ENCODE measurements at regions of chr5 and their contacts with region 1.

Region 1: GRCh38 chr5:40223884-40224402 is 455.8 kb upstream of the PTGER4 start:
- DNase-seq: peak; percentile 43
- H3K4me3 Mint-ChIP-seq: peak overlapping the region; percentile 54
- H3K27ac Mint-ChIP-seq: peak overlapping the region; percentile 94
- H3K4me1 Mint-ChIP-seq: peaks cover 51% of the 10 kb centered on the region
- H3K27me3 Mint-ChIP-seq: no peaks in the 10 kb centered on the region

Region 2: GRCh38 chr5:40240111-40240510 is 16.2 kb after region 1 on chr5:
- intact Hi-C with region 1: loop called (anchors 1 kb)
- DNase-seq: no peak
- H3K4me3 Mint-ChIP-seq: no peak overlapping the region
- H3K27ac Mint-ChIP-seq: no peak overlapping the region
- H3K4me1 Mint-ChIP-seq: peaks cover 20% of the 10 kb centered on the region
- H3K27me3 Mint-ChIP-seq: no peaks in the 10 kb centered on the region

Region 3: DNA sequence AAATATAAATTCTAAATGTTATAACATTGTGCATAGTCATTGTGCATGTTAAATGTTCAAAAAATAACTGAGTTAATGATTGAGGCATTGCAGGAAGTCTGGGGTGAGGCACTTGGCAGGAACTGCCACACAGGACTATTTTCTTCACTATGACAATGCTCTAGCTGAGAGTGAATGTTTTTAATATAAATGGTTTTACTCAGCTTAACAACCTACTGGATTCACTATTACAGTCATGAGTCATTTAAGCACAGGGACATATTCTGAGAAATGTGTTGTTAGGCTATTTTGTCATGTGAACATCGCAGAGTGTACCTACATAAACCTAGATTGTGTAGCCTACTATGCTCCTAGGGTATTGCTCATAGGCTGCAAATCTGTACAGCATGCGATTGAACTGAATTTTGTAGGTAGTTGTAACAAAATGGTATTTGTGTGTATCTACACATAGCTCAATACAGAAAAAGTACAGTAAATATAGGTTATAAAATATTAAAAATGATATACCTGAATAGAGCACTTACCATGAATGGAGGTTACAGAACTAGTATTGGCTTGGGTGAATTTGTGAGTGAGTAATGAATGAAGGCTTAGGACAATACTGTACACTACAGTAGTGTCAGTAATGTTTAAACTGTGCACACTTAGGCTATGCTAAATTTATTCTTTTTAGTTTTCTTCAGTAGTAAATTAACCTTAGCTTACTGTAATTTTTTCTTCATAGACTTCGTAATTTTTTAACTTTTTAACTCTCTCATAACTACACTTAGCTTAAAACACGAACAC is 109.7 kb after region 1 on chr5:
- intact Hi-C with region 1: loop called (anchors 1 kb)
- DNase-seq: no peak
- H3K4me3 Mint-ChIP-seq: no peak overlapping the region
- H3K27ac Mint-ChIP-seq: peak overlapping the region; percentile 43
- H3K4me1 Mint-ChIP-seq: peaks cover 43% of the 10 kb centered on the region
- H3K27me3 Mint-ChIP-seq: no peaks in the 10 kb centered on the region

Region 4: DNA sequence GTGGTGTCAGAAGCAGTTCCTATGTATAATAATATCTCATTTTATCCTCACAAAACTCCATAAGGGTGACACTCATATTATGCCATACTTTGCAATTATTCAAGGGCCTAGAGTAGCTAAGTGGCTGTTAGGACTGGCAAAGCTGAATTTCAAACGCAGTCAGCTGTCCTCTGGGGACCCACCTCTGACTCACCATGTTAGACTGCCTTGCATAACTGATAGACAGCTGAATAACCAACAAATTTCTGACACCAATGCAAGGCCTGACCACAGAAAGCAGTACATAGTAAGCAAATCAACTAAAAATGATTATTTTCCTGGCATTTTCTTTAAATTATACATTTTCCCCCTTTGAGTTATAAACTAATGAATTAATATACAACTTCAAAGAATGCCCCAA is 204.2 kb after region 1 on chr5:
- intact Hi-C with region 1: loop called (anchors 1 kb)
- DNase-seq: no peak
- H3K4me3 Mint-ChIP-seq: no peak overlapping the region
- H3K27ac Mint-ChIP-seq: peak overlapping the region; percentile 76
- H3K4me1 Mint-ChIP-seq: peaks cover 49% of the 10 kb centered on the region
- H3K27me3 Mint-ChIP-seq: no peaks in the 10 kb centered on the region

Region 5: DNA sequence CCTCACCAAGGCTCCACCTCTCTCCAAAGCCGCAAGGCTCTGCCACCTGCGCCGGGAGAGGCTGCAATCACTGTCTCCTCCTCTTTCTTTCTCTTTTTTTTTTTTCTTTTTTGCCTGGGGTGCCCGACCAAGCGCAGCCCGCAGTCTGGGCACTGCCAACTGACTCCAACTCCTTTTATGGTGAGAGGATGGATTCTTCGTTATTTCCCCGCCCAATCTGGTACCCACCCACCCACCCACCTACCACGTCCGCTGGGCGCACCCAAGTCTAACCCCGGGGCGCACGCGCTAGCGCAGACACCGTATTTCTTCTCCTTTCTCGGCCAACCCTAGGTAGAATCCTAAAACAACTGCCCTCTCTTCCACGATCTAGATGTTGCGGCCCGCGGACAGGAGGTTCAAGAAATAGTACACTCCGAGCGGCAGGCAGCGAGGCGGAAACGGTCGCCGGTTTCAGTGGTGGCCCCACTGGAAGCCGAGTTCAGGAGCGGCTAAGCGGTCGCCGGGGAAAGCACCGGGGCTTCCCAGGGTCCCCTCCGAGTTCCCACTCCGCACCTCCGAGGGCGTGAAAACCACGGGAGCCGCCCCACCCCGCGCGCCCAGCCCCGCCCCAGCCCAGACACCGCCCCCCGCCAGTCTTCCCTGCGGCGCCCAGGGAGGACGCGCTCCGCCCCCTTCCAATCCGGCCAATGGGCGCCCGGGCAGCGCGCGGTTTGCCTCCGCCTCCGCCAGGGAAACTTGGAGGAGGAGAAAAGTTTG is 455.4 kb after region 1 on chr5:
- intact Hi-C with region 1: loop called (anchors 2 kb)
- DNase-seq: peak; percentile 90
- H3K4me3 Mint-ChIP-seq: peak overlapping the region; percentile 99
- H3K27ac Mint-ChIP-seq: peak overlapping the region; percentile 98
- H3K4me1 Mint-ChIP-seq: peaks cover 51% of the 10 kb centered on the region
- H3K27me3 Mint-ChIP-seq: no peaks in the 10 kb centered on the region

Measured in activated T-helper 2 cell treated with anti-CD3 and anti-CD28 coated beads, Interferon-gamma antibody, Interleukin-2, Interleukin-4, amounts not matched to agents 10 μg/mL and 5 μg/mL and 100 μg/mL, durations not matched to agents 14 hours and 24 hours and 36 hours (primary cell).